Sciatic nerve (tissue), 2 donors: ENCODE measurements at regions of chr11 and their contacts with region 1.

Region 1: GRCh38 chr11:65117216-65118096 is at the start of gene ZNHIT2:
- DNase-seq: peak; percentile 100
- ATAC-seq: peak; percentile 94
- total RNA-seq, gene ZNHIT2: 6.8 TPM

Region 2: GRCh38 chr11:64924102-64924851 is 193.2 kb before region 1 on chr11 and contains the start of gene PPP2R5B:
- intact Hi-C with region 1: loop called (anchors 10 kb)
- DNase-seq: peak; percentile 95
- ATAC-seq: peak; percentile 97
- total RNA-seq, gene PPP2R5B: 21.1 TPM

Region 3: DNA sequence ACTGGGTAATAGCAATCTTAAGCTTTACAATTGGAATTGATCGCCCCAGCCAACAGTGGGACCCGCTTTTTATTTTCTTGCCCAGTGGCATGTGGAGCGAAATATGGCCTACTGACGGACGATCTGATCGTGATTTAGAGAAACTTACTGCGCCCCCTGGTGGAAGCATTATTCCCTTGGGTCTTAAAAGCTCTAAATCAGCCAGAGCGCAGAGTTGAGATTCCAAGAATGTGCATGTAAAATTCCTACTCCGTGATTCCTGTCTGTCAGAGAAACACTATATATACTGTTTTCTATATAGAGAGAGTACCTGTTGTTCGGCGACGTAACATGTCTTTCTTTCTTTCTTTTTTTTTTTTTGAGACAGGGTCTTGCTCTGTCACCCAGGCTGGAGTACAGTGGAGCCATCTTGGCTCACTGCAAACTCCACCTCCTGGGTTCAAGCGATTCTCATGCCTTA is 212.5 kb after region 1 on chr11:
- intact Hi-C with region 1: no loop called
- DNase-seq: peak; percentile 94
- ATAC-seq: peak; percentile 65

Region 4: GRCh38 chr11:65425105-65425970 is 307.9 kb after region 1 on chr11:
- intact Hi-C with region 1: no loop called
- DNase-seq: peak; percentile 64
- ATAC-seq: no peak

Region 5: GRCh38 chr11:66126808-66127555 is 1009.5 kb after region 1 on chr11:
- intact Hi-C with region 1: no loop called
- DNase-seq: peak; percentile 67
- ATAC-seq: peak; percentile 97